B cell (primary cell): ENCODE measurements at regions of chr2 and their contacts with region 1.

Region 1: DNA sequence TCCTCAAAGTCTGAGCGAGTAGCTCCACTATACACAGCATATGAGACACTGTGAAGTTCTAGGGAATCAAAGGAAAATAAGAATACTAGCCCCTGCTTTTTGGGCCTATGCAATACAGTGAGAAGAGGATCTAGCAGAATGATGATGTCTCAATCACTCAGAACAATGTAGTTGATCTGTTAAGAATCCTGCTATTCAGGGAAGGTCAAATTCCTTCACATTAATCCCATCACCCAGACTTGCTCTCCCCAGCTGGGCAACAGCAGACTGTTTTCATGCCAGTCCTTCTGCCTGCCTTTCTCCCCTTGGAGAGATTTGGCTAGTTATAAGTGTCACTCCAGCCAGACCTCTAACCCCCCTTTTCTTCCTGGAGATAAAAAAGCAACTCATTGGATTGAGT is 230.0 kb upstream of the EPHA4 start:
- DNase-seq: no peak
- ATAC-seq: no peak
- H3K4me3 ChIP-seq: no peak overlapping the region
- H3K4me3 Mint-ChIP-seq: no peak overlapping the region
- H3K27ac ChIP-seq: no peak overlapping the region
- H3K27ac Mint-ChIP-seq: no peak overlapping the region
- H3K4me1 ChIP-seq: no peaks in the 10 kb centered on the region
- H3K4me1 Mint-ChIP-seq: no peaks in the 10 kb centered on the region
- H3K27me3 ChIP-seq: no peaks in the 10 kb centered on the region
- H3K27me3 Mint-ChIP-seq: no peaks in the 10 kb centered on the region
- CTCF ChIP-seq: no peak

Region 2: GRCh38 chr2:221758076-221758475 is 44.0 kb before region 1 on chr2:
- CTCF ChIA-PET with region 1: no interaction called
- POLR2A ChIA-PET with region 1: no interaction called
- intact Hi-C with region 1: no loop called
- DNase-seq: no peak
- ATAC-seq: no peak
- H3K4me3 ChIP-seq: no peak overlapping the region
- H3K4me3 Mint-ChIP-seq: no peak overlapping the region
- H3K27ac ChIP-seq: no peak overlapping the region
- H3K27ac Mint-ChIP-seq: no peak overlapping the region
- H3K4me1 ChIP-seq: no peaks in the 10 kb centered on the region
- H3K4me1 Mint-ChIP-seq: no peaks in the 10 kb centered on the region
- H3K27me3 ChIP-seq: no peaks in the 10 kb centered on the region
- H3K27me3 Mint-ChIP-seq: no peaks in the 10 kb centered on the region
- CTCF ChIP-seq: no peak

Region 3: GRCh38 chr2:221779614-221780067 is 22.4 kb before region 1 on chr2:
- CTCF ChIA-PET with region 1: no interaction called
- POLR2A ChIA-PET with region 1: no interaction called
- intact Hi-C with region 1: loop called (anchors 1 kb)
- DNase-seq: no peak
- ATAC-seq: no peak
- H3K4me3 ChIP-seq: no peak overlapping the region
- H3K4me3 Mint-ChIP-seq: no peak overlapping the region
- H3K27ac ChIP-seq: no peak overlapping the region
- H3K27ac Mint-ChIP-seq: no peak overlapping the region
- H3K4me1 ChIP-seq: no peaks in the 10 kb centered on the region
- H3K4me1 Mint-ChIP-seq: no peaks in the 10 kb centered on the region
- H3K27me3 ChIP-seq: no peaks in the 10 kb centered on the region
- H3K27me3 Mint-ChIP-seq: peaks cover 4% of the 10 kb centered on the region
- CTCF ChIP-seq: no peak